ENCODE measurements at regions of chr10 and their contacts with region 1.

Region 1: GRCh38 chr10:63614371-63614891 is 93.2 kb downstream of the REEP3 start:
- DNase-seq: peak; percentile 63
- ATAC-seq: peak; percentile 78
- H3K4me3 ChIP-seq: no peak overlapping the region
- H3K27ac ChIP-seq: peak overlapping the region; percentile 61; the same call in 1 of the 2 replicates
- H3K4me1 ChIP-seq: peaks cover 5% of the 10 kb centered on the region; the same call in 1 of the 2 replicates
- H3K27me3 ChIP-seq: no peaks in the 10 kb centered on the region
- CTCF ChIP-seq: no peak
- POLR2A ChIP-seq: no peak
- RAD21 ChIP-seq: no peak

Region 2: DNA sequence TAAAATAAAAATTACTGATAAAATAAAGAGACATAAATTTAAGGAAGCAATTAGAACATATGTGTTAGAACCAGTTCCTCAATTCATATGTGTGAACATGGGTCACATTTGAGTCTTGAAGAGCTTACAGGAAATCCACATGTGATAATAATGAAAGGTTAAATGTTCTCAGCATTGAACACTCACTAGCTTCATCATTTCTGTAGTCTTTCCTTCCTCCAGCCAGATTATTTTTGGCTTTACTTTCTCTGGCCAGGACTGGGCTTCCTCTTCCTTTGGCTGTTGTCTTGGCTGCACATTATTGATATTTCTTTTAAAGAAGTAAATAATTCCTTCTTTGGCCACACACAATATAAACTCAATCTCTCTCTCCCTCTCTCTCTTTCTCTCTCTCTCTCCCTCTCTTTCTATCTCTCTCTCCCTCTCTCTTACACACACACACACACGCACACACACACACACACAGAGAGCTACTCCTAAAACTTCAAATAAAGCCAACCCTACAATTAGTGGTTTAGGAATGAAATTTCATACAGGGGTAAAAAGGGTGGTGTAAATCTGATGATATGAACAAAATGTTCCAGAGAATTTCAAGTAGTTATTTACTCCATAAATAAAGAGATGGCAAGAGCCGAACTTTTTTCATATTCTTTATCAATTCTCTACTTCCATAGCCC is 77.9 kb after region 1 on chr10:
- CTCF ChIA-PET with region 1: no interaction called
- POLR2A ChIA-PET with region 1: no interaction called
- dilution Hi-C with region 1: no loop called
- in situ Hi-C with region 1: no loop called
- intact Hi-C with region 1: no loop called
- DNase-seq: no peak
- ATAC-seq: no peak
- H3K4me3 ChIP-seq: no peak overlapping the region
- H3K27ac ChIP-seq: no peak overlapping the region
- H3K4me1 ChIP-seq: no peaks in the 10 kb centered on the region
- H3K27me3 ChIP-seq: no peaks in the 10 kb centered on the region
- CTCF ChIP-seq: no peak
- POLR2A ChIP-seq: no peak
- RAD21 ChIP-seq: no peak

Region 3: GRCh38 chr10:63773106-63773505 is 158.7 kb after region 1 on chr10:
- CTCF ChIA-PET with region 1: no interaction called
- POLR2A ChIA-PET with region 1: interaction called, 19 read pairs
- dilution Hi-C with region 1: no loop called
- in situ Hi-C with region 1: no loop called
- intact Hi-C with region 1: no loop called
- DNase-seq: no peak
- ATAC-seq: no peak
- H3K4me3 ChIP-seq: no peak overlapping the region
- H3K27ac ChIP-seq: no peak overlapping the region
- H3K4me1 ChIP-seq: no peaks in the 10 kb centered on the region
- H3K27me3 ChIP-seq: peaks cover 11% of the 10 kb centered on the region
- CTCF ChIP-seq: no peak
- POLR2A ChIP-seq: no peak
- RAD21 ChIP-seq: no peak